ENCODE measurements at regions of chr7 and their contacts with region 1.

Region 1: GRCh38 chr7:132709971-132710567 is 133.8 kb upstream of the PLXNA4 start:
- DNase-seq: peak; percentile 53
- H3K4me3 Mint-ChIP-seq: no peak overlapping the region
- H3K27ac Mint-ChIP-seq: no peak overlapping the region
- H3K4me1 Mint-ChIP-seq: no peaks in the 10 kb centered on the region
- H3K27me3 Mint-ChIP-seq: peaks cover 79% of the 10 kb centered on the region
- CTCF ChIP-seq: peak; percentile 16

Region 2: GRCh38 chr7:133230591-133231194 is 520.6 kb after region 1 on chr7:
- CTCF ChIA-PET with region 1: no interaction called
- intact Hi-C with region 1: loop called (anchors 2 kb)
- DNase-seq: peak; percentile 61
- H3K4me3 Mint-ChIP-seq: no peak overlapping the region
- H3K27ac Mint-ChIP-seq: no peak overlapping the region
- H3K4me1 Mint-ChIP-seq: peaks cover 9% of the 10 kb centered on the region
- H3K27me3 Mint-ChIP-seq: peaks cover 25% of the 10 kb centered on the region
- CTCF ChIP-seq: peak; percentile 38

Region 3: GRCh38 chr7:134022286-134022911 is 1312.3 kb after region 1 on chr7:
- CTCF ChIA-PET with region 1: no interaction called
- intact Hi-C with region 1: loop called (anchors 2 kb)
- DNase-seq: no peak
- H3K4me3 Mint-ChIP-seq: no peak overlapping the region
- H3K27ac Mint-ChIP-seq: no peak overlapping the region
- H3K4me1 Mint-ChIP-seq: no peaks in the 10 kb centered on the region
- H3K27me3 Mint-ChIP-seq: no peaks in the 10 kb centered on the region
- CTCF ChIP-seq: no peak

Measured in Calu3 (cell line).